Heart right ventricle (tissue), 16 donors: ENCODE measurements at regions of chr11 and their contacts with region 1.

Region 1: GRCh38 chr11:11621573-11622319 is at the start of gene GALNT18:
- DNase-seq: peak; percentile 93 to 94
- ATAC-seq: peak; percentile 93 to 98 (median 96)
- H3K4me3 ChIP-seq: peak within 1 kb of the TSS; percentile 70 to 92 (median 78)
- H3K27ac ChIP-seq: peak within 1 kb of the TSS; percentile 24 to 88 (median 81)
- H3K4me1 ChIP-seq: peaks cover 0 to 58% (median 16%) of the 10 kb centered on the region in 9 donors
- H3K27me3 ChIP-seq: peaks cover 0 to 40% (median 0%) of the 10 kb centered on the region in 7 donors
- CTCF ChIP-seq: peak; percentile 40 to 73 (median 57)
- total RNA-seq, gene GALNT18: 9.8 to 29.0 (median 15.6) TPM

Region 2: GRCh38 chr11:11036848-11037732 is 584.7 kb before region 1 on chr11:
- intact Hi-C with region 1: loop called in 1 of 10 experiments (anchors 10 kb)
- DNase-seq: peak in 1 of 2 donors; percentile 57
- ATAC-seq: peak in 7 of 8 donors; percentile 74 to 88 (median 85)
- H3K4me3 ChIP-seq: no peak overlapping the region
- H3K27ac ChIP-seq: no peak overlapping the region
- H3K4me1 ChIP-seq: peaks cover 0 to 8% (median 0%) of the 10 kb centered on the region in 9 donors
- H3K27me3 ChIP-seq: no peaks in the 10 kb centered on the region
- CTCF ChIP-seq: peak; percentile 66 to 87 (median 82)

Region 3: GRCh38 chr11:11332141-11332710 is 289.5 kb before region 1 on chr11:
- intact Hi-C with region 1: loop called in 2 of 10 experiments (anchors 10 kb)
- DNase-seq: no peak
- ATAC-seq: no peak
- H3K4me3 ChIP-seq: no peak overlapping the region
- H3K27ac ChIP-seq: no peak overlapping the region
- H3K4me1 ChIP-seq: peaks cover 0 to 7% (median 0%) of the 10 kb centered on the region in 9 donors
- H3K27me3 ChIP-seq: no peaks in the 10 kb centered on the region
- CTCF ChIP-seq: no peak

Region 4: DNA sequence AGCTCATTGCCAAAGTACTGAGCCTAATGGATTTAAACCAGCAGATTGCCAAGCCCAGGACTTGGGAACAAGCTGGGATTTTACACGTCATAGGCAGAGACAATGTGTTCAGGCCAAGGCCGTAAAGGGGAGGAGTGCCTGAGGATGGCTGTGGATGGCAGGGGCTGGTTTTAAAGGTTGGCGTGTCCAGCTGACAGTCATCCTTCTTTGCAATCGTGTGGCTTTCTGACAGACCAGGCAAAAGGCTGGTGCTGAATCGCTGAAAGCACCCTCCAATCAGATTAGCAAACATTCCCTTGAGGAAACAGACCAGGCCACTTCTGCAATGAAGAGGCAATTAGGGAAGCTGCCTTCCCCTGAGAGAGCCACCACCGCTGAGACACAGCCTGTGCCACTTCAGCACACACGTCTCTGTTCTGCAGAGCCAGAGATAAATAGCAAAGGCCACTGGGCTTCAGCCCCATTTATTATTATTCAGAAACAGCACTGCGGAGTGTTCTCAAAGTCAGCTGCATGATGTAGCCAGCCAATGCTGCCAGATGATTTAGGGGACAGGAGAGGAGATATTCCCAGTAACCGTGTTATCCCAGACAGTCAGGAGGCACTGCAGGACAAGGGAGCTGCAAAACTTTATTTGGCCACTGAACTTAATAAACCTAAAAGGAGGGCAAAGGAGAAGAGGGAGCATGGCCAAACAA is 214.5 kb before region 1 on chr11:
- intact Hi-C with region 1: loop called in 4 of 10 experiments (anchors 5 to 10 kb)
- DNase-seq: peak in 1 of 2 donors; percentile 71
- ATAC-seq: peak; percentile 30 to 86 (median 76)
- H3K4me3 ChIP-seq: no peak overlapping the region
- H3K27ac ChIP-seq: peak overlapping the region in 9 of 10 donors; percentile 28 to 86 (median 59)
- H3K4me1 ChIP-seq: peaks cover 9 to 80% (median 45%) of the 10 kb centered on the region in 9 donors
- H3K27me3 ChIP-seq: peaks cover 0 to 11% (median 0%) of the 10 kb centered on the region in 7 donors
- CTCF ChIP-seq: peak in 6 of 9 donors; percentile 15 to 57 (median 30)

Region 5: DNA sequence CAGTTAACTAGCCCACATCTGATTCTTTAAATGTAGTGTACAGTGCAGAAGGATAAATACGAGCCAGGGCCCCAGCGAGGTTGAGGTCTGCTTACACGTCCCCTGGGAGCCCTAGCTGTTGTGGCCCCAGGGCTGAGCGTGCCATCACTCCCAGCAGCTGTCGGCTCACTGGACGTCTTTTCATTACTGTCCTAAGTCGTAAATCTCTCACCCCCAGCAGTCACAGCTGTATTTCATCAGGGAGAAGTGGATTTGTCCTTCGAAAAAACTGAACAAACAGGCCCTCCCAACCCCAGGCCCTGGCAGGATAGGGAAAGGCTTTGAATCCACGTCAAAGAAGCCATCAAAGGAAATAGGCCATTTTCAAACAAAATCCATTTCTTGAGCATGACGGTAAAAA is 158.3 kb before region 1 on chr11:
- intact Hi-C with region 1: loop called in 1 of 10 experiments (anchors 10 kb)
- DNase-seq: no peak
- ATAC-seq: no peak
- H3K4me3 ChIP-seq: no peak overlapping the region
- H3K27ac ChIP-seq: no peak overlapping the region
- H3K4me1 ChIP-seq: peaks cover 5 to 65% (median 24%) of the 10 kb centered on the region in 9 donors
- H3K27me3 ChIP-seq: no peaks in the 10 kb centered on the region
- CTCF ChIP-seq: no peak

Region 6: DNA sequence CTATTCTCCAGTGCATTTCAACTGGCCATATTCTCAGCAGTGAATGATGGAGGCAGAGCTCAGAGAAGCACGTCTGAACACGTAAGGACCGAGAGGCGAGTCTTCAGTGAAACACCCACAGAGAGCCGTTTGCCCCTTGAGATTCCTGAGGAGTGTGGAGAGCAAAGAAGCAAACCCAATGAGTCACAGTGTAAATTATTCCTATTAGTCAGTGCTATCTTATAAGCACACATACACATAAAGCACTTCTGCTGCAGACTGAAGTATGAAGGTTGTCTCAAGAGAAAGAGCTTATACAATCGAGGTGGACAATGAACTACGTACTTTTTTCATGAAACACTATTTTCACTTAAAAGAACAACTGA is 37.3 kb before region 1 on chr11:
- intact Hi-C with region 1: loop called in 3 of 10 experiments (anchors 2 to 5 kb)
- DNase-seq: no peak
- ATAC-seq: no peak
- H3K4me3 ChIP-seq: no peak overlapping the region
- H3K27ac ChIP-seq: peak overlapping the region in 3 of 10 donors; percentile 78 to 90 (median 79)
- H3K4me1 ChIP-seq: peaks cover 21 to 98% (median 58%) of the 10 kb centered on the region in 9 donors
- H3K27me3 ChIP-seq: no peaks in the 10 kb centered on the region
- CTCF ChIP-seq: no peak